A673 (cell line): ENCODE measurements at regions of chr11 and their contacts with region 1.

Region 1: GRCh38 chr11:119474682-119475596 is 52.0 kb upstream of the THY1 start:
- DNase-seq: peak; percentile 79
- H3K4me3 ChIP-seq: no peak overlapping the region
- H3K27ac ChIP-seq: no peak overlapping the region
- H3K4me1 ChIP-seq: no peaks in the 10 kb centered on the region
- H3K27me3 ChIP-seq: no peaks in the 10 kb centered on the region
- CTCF ChIP-seq: peak; percentile 95

Region 2: DNA sequence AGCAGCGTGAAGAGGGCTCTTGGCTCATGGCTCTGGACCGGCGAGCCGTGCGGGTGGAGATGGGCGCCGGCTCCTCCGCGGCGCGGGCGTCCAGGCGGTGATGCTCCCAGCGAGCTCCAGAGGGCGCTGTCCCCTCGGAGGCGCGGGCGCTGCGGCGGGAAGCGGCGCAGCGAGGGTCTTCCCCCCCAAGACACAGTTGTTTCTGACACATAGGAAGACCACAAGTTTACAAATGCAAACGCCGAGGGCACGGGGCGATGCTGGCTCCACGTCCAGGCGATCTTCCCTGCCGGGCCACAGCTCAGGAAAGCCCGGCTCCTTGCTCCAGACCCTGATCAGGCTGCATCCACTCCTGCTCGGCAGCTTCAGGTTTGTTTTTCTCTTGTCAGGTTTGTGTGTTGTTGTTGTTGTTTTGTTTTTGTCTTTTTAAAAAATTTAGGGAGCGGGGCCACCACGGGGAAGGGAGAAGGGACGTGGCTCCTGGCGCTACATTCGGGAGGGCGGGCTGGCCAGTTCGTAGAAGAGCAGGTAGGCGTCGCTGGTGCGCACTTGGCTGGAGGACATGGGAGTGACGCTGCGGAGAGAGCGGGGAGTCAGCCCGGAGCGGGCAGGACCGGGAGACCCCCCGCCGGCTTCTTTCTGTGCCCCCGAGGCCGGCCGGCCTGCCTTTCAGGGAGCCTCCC is 118.4 kb before region 1 on chr11:
- CTCF ChIA-PET with region 1: interaction called, 50 read pairs
- POLR2A ChIA-PET with region 1: no interaction called
- intact Hi-C with region 1: loop called (anchors 1 kb)
- DNase-seq: peak; percentile 93
- H3K4me3 ChIP-seq: peak overlapping the region; percentile 64
- H3K27ac ChIP-seq: peak overlapping the region; percentile 79
- H3K4me1 ChIP-seq: peaks cover 9% of the 10 kb centered on the region
- H3K27me3 ChIP-seq: no peaks in the 10 kb centered on the region
- CTCF ChIP-seq: peak; percentile 95

Region 3: GRCh38 chr11:119381181-119381988 is 93.6 kb before region 1 on chr11 and contains the start of gene USP2:
- CTCF ChIA-PET with region 1: interaction called, 17 read pairs
- POLR2A ChIA-PET with region 1: no interaction called
- intact Hi-C with region 1: loop called (anchors 2 kb)
- DNase-seq: peak; percentile 98
- H3K4me3 ChIP-seq: peak within 1 kb of the TSS; percentile 53
- H3K27ac ChIP-seq: peak within 1 kb of the TSS; percentile 44
- H3K4me1 ChIP-seq: peaks cover 6% of the 10 kb centered on the region
- H3K27me3 ChIP-seq: no peaks in the 10 kb centered on the region
- CTCF ChIP-seq: peak; percentile 100
- total RNA-seq, gene USP2: 4.8 and 6.2 TPM in 2 replicates

Region 4: DNA sequence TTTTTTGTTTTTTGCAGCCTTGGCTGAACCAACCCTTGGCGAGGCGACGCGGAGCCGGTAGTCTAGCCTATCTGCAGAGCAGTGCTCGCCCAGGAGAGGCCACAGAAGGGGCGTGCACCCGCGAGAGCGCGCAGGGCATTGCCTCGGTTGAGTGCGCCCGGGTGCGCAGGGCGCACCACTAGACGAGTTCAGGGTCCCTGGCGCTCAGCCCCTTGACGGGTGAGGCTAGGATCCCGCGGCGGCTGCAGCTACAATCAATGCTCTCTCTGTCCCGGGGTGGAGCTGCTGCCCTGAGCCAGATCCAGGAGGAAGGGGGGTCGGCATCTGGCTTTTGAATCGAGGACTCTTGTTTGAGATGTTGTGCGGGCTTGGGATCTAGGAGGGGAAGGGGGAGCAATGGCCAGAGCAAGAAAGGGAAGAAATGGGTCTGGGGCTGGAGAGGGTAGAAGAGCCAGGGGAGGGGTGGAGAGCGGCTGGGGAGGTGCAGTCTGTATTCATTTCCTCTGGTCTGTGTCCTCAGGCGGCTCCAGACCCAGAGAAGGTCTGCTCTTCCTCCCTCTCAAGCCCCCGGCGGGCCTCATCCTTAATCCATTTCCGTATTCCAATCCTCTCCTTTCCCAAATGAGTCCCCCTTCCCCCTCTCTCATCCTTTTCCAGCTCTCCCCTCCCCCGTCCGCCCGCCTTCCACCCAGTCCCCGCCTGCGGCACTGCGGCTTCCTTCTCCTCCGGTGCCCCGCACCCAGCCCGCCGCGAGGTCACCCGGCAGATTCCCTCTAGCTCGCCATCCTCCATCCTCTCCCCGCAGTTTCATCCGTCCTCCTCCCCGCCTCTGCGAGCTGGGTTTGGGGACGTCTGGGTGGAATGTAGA is 52.8 kb before region 1 on chr11:
- CTCF ChIA-PET with region 1: interaction called, 7 read pairs
- POLR2A ChIA-PET with region 1: no interaction called
- intact Hi-C with region 1: loop called (anchors 2 kb)
- DNase-seq: peak; percentile 52
- H3K4me3 ChIP-seq: peak overlapping the region; percentile 89
- H3K27ac ChIP-seq: peak overlapping the region; percentile 64
- H3K4me1 ChIP-seq: peaks cover 24% of the 10 kb centered on the region
- H3K27me3 ChIP-seq: no peaks in the 10 kb centered on the region
- CTCF ChIP-seq: no peak

Region 5: DNA sequence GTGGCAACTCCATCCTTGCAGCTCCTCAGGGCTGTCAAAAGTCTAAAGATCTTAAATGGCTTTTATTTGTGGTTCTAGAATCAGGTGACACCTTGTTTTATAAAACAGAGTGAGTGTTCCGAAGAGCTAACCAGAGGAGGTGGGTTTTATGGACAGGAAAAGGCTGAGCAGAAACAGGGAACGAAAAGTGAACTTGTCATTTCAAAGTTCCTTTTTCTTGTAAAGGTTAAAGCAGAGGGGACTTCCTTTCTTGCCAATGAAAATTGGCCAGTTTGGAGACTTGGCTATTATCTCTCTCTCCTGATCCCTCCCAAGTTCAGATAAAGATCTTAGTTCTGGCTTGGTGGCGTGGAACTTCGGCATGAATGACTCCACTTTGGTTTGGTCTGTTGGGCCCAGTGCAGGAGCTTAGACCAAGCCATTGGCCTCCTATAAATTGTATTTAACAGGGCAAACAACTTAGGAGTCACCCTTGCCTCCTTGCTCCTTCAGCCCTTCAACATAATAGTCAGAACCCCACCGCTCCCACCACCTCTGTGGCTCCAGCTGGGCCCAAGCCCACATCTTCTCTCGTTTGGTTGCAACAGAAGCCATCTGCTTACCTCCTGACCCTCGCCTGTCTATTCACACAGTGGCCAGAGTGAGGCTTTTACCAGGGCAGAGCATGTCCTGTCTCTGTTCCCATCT is 50.4 kb after region 1 on chr11:
- CTCF ChIA-PET with region 1: no interaction called
- POLR2A ChIA-PET with region 1: no interaction called
- intact Hi-C with region 1: no loop called
- DNase-seq: no peak
- H3K4me3 ChIP-seq: no peak overlapping the region
- H3K27ac ChIP-seq: no peak overlapping the region
- H3K4me1 ChIP-seq: peaks cover 12% of the 10 kb centered on the region
- H3K27me3 ChIP-seq: no peaks in the 10 kb centered on the region
- CTCF ChIP-seq: no peak